ENCODE measurements at regions of chr3 and their contacts with region 1.

Region 1: GRCh38 chr3:182792901-182793662 is at the start of gene ATP11B:
- DNase-seq: peak; percentile 76 to 86 (median 80)
- H3K4me3 ChIP-seq: peak within 1 kb of the TSS; percentile 97 to 98
- H3K4me3 Mint-ChIP-seq: peak within 1 kb of the TSS; percentile 99 to 100 (median 100)
- H3K27ac ChIP-seq: peak within 1 kb of the TSS; percentile 95
- H3K27ac Mint-ChIP-seq: peak within 1 kb of the TSS; percentile 99 to 100 (median 100)
- H3K4me1 ChIP-seq: peaks cover 25% of the 10 kb centered on the region
- H3K4me1 Mint-ChIP-seq: peaks cover 23 to 49% (median 27%) of the 10 kb centered on the region in 4 donors
- H3K27me3 ChIP-seq: no peaks in the 10 kb centered on the region
- H3K27me3 Mint-ChIP-seq: peaks cover 1 to 3% of the 10 kb centered on the region in 2 donors
- total RNA-seq, gene ATP11B: 119 to 130 TPM

Region 2: GRCh38 chr3:181761901-181762300 is 1031.2 kb before region 1 on chr3:
- CTCF ChIA-PET with region 1: no interaction called
- POLR2A ChIA-PET with region 1: no interaction called
- intact Hi-C with region 1: no loop called
- DNase-seq: no peak
- H3K4me3 ChIP-seq: no peak overlapping the region
- H3K4me3 Mint-ChIP-seq: no peak overlapping the region
- H3K27ac ChIP-seq: no peak overlapping the region
- H3K27ac Mint-ChIP-seq: no peak overlapping the region
- H3K4me1 ChIP-seq: no peaks in the 10 kb centered on the region
- H3K4me1 Mint-ChIP-seq: no peaks in the 10 kb centered on the region
- H3K27me3 ChIP-seq: no peaks in the 10 kb centered on the region
- H3K27me3 Mint-ChIP-seq: peaks cover 0 to 2% of the 10 kb centered on the region in 2 donors

Region 3: DNA sequence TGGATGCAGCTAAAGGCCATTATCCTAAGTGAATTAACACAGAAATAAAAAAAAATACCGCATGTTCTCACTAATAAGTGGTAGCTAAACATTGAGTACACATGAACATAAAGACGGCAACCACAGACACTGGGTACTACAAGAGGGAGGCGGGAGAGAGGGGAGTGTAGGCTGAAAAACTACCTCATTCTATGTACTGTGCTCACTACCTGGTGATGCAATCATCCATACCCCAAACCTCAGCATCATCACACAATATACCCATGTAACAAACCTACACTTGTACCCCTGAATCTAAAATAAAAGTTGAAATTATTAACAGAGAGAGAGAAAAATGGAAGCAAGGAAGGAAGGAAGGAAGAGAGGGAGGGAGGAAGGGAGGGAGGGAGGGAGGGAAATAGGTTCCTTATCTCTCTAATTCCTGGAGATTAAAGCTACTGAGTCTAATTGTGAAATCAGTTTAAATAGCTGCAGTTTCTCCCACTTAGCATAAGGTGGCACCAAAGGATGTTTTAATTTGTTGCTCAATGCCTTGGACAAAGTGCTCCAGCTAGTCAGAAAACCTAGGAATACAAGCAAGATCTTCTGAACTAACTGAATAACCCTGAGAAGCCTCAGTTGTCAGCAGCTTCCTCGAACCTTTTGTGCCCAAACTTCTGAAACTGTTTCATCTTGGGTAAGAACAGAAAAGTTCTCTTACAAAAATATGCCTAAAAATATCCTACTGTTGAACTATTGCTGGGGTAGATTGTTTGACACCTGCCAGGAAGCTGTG is 79.2 kb before region 1 on chr3:
- CTCF ChIA-PET with region 1: interaction called, 4 read pairs
- POLR2A ChIA-PET with region 1: interaction called, 4 read pairs
- intact Hi-C with region 1: loop called (anchors 5 kb)
- DNase-seq: peak in 4 of 5 donors; percentile 25 to 41 (median 28)
- H3K4me3 ChIP-seq: no peak overlapping the region
- H3K4me3 Mint-ChIP-seq: no peak overlapping the region
- H3K27ac ChIP-seq: no peak overlapping the region
- H3K27ac Mint-ChIP-seq: no peak overlapping the region
- H3K4me1 ChIP-seq: no peaks in the 10 kb centered on the region
- H3K4me1 Mint-ChIP-seq: peaks cover 0 to 2% (median under 1%) of the 10 kb centered on the region in 4 donors
- H3K27me3 ChIP-seq: no peaks in the 10 kb centered on the region
- H3K27me3 Mint-ChIP-seq: no peaks in the 10 kb centered on the region

Region 4: GRCh38 chr3:182837855-182838454 is 44.9 kb after region 1 on chr3:
- CTCF ChIA-PET with region 1: interaction called, 3 read pairs
- POLR2A ChIA-PET with region 1: interaction called, 6 read pairs
- intact Hi-C with region 1: loop called (anchors 2 kb)
- DNase-seq: peak in 4 of 5 donors; percentile 21 to 30 (median 26)
- H3K4me3 ChIP-seq: no peak overlapping the region
- H3K4me3 Mint-ChIP-seq: no peak overlapping the region
- H3K27ac ChIP-seq: no peak overlapping the region
- H3K27ac Mint-ChIP-seq: peak overlapping the region in 1 of 7 donors; percentile 25
- H3K4me1 ChIP-seq: no peaks in the 10 kb centered on the region
- H3K4me1 Mint-ChIP-seq: peaks cover 8 to 17% (median 10%) of the 10 kb centered on the region in 4 donors
- H3K27me3 ChIP-seq: no peaks in the 10 kb centered on the region
- H3K27me3 Mint-ChIP-seq: no peaks in the 10 kb centered on the region

Region 5: DNA sequence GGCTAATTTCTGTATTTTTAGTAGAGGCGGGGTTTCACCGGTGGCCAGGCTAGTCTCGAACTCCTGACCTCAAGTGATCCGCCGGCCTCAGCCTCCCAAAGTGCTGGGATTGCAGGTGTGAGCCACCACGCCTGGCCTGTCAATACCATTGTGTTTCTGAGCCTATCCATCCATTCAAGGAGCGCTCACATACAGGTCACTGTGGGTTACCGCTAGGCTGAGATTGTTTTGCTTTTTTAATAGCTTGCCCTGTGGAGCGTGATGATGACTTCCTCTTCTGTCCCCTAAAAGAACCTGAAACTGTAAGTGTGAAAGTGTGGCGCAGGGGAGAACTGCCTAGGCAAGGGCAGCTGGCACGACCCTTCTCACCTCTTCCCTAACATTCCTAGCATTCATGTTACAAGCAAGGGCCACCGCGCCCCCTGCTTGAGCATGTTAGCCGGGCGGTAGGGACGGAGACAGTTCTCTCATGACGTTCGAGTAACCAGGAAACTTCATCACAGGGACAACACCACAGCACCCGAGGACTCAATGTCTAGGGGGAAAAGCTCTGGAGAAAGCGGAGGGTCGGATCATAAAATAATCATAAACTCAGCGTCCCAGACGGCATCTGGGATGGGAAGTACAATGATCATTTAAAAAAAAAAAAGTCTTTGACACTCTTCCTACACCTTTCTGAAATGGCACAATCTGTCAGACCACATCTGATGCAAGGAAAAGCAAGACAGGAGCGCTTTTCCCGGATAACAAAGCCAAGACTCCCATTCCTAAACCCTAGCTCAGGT is 368.7 kb after region 1 on chr3:
- CTCF ChIA-PET with region 1: no interaction called
- POLR2A ChIA-PET with region 1: no interaction called
- intact Hi-C with region 1: loop called (anchors 5 kb)
- DNase-seq: peak in 2 of 5 donors; percentile 14 to 18
- H3K4me3 ChIP-seq: peak overlapping the region; percentile 33 to 70
- H3K4me3 Mint-ChIP-seq: peak overlapping the region; percentile 83 to 95 (median 92)
- H3K27ac ChIP-seq: peak overlapping the region; percentile 51
- H3K27ac Mint-ChIP-seq: peak overlapping the region; percentile 66 to 90 (median 81)
- H3K4me1 ChIP-seq: peaks cover 7% of the 10 kb centered on the region
- H3K4me1 Mint-ChIP-seq: peaks cover 8 to 11% (median 9%) of the 10 kb centered on the region in 4 donors
- H3K27me3 ChIP-seq: no peaks in the 10 kb centered on the region
- H3K27me3 Mint-ChIP-seq: no peaks in the 10 kb centered on the region